IMR-90 (cell line): ENCODE measurements at regions of chr14 and their contacts with region 1.

Region 1: GRCh38 chr14:98189944-98190343 is 1082.1 kb downstream of the BCL11B start:
- DNase-seq: no peak
- ATAC-seq: no peak
- H3K4me3 ChIP-seq: no peak overlapping the region
- H3K27ac ChIP-seq: no peak overlapping the region
- H3K4me1 ChIP-seq: no peaks in the 10 kb centered on the region
- H3K27me3 ChIP-seq: no peaks in the 10 kb centered on the region
- CTCF ChIP-seq: no peak
- POLR2A ChIP-seq: no peak
- RAD21 ChIP-seq: no peak

Region 2: GRCh38 chr14:97120611-97121031 is 1069.3 kb before region 1 on chr14:
- CTCF ChIA-PET with region 1: no interaction called
- POLR2A ChIA-PET with region 1: no interaction called
- dilution Hi-C with region 1: no loop called
- in situ Hi-C with region 1: no loop called
- intact Hi-C with region 1: loop called (anchors 5 kb)
- DNase-seq: no peak
- ATAC-seq: no peak
- H3K4me3 ChIP-seq: no peak overlapping the region
- H3K27ac ChIP-seq: no peak overlapping the region
- H3K4me1 ChIP-seq: no peaks in the 10 kb centered on the region
- H3K27me3 ChIP-seq: no peaks in the 10 kb centered on the region
- CTCF ChIP-seq: no peak
- POLR2A ChIP-seq: no peak
- RAD21 ChIP-seq: no peak

Region 3: DNA sequence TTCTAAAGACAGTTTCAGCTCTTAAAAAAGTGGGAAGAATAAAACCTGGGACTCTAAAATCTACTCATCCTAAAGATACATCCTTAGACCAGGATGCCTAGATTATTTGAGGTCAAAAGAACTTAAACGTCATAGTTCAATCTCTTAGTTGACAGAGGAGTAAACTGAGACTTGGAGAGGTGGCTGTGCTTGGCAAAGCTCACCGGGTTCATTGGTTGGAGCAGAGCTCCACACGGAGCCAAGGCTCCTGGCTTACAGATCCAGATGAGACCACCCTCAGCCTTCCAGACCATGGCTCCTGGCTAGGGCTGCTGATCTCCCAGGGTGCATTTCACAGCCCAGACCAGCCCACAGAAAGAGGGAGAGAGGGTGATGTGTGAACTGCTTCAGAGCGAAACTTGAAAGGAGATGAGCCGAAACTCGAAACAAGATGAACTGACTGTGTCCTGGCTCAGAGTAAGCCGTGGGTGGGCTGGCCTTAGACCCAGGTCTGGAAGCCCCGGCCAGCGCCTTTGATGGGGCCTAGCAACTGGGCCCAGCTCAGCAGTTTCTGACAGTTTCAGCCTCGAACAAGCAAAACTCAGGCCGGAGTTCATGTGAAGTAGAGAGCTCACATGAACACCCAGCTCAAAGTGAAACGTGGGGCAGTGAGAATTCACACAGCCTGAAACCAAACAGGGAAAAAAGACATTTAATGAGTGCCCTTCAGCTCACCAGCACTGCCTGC is 37.2 kb after region 1 on chr14:
- CTCF ChIA-PET with region 1: no interaction called
- POLR2A ChIA-PET with region 1: no interaction called
- dilution Hi-C with region 1: no loop called
- in situ Hi-C with region 1: no loop called
- intact Hi-C with region 1: no loop called
- DNase-seq: no peak
- ATAC-seq: no peak
- H3K4me3 ChIP-seq: no peak overlapping the region
- H3K27ac ChIP-seq: no peak overlapping the region
- H3K4me1 ChIP-seq: no peaks in the 10 kb centered on the region
- H3K27me3 ChIP-seq: no peaks in the 10 kb centered on the region
- CTCF ChIP-seq: no peak
- POLR2A ChIP-seq: no peak
- RAD21 ChIP-seq: no peak